ENCODE measurements at regions of chr16 and their contacts with region 1.

Region 1: GRCh38 chr16:17149904-17150483 is 320.8 kb downstream of the XYLT1 start:
- DNase-seq: no peak
- ATAC-seq: no peak
- H3K4me3 ChIP-seq: no peak overlapping the region
- H3K27ac ChIP-seq: no peak overlapping the region
- H3K4me1 ChIP-seq: peaks cover 0 to 6% (median 0%) of the 10 kb centered on the region in 9 donors
- H3K27me3 ChIP-seq: no peaks in the 10 kb centered on the region
- CTCF ChIP-seq: no peak

Region 2: GRCh38 chr16:17184026-17184425 is 34.0 kb after region 1 on chr16:
- intact Hi-C with region 1: loop called in 1 of 10 experiments (anchors 1 kb)
- DNase-seq: no peak
- ATAC-seq: no peak
- H3K4me3 ChIP-seq: no peak overlapping the region
- H3K27ac ChIP-seq: no peak overlapping the region
- H3K4me1 ChIP-seq: no peaks in the 10 kb centered on the region
- H3K27me3 ChIP-seq: no peaks in the 10 kb centered on the region
- CTCF ChIP-seq: no peak